Activated CD4-positive, alpha-beta T cell treated with anti-CD3 and anti-CD28 coated beads, Interleukin-2, amount 10 ng/mL, durations not matched to agents 24 days and 14 days (primary cell): ENCODE measurements at regions of chr3 and their contacts with region 1.

Region 1: GRCh38 chr3:107690522-107691138 is 167.9 kb downstream of the BBX start:
- DNase-seq: peak; percentile 62
- H3K4me3 Mint-ChIP-seq: no peak overlapping the region
- H3K27ac Mint-ChIP-seq: no peak overlapping the region
- H3K4me1 Mint-ChIP-seq: no peaks in the 10 kb centered on the region
- H3K27me3 Mint-ChIP-seq: no peaks in the 10 kb centered on the region

Region 2: DNA sequence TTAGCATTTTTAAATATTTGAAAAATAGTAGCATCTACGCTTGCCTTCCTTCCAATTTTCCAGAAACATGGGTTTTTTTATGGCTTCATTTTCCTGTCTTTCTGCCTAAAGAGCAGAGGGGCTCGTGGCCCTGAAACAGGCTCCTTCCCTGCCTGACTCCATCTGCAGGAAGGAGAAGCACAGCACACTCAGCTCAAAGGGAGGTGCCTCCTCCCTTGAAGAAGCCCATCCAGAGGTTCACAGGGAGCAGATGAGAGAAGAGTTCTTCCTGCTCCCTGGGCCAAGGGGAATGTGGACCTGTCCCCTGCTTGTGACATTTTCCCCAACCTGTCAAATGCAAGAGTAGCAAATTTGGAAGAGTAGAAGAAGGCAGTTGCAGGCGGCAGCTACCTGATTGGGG is 112.1 kb before region 1 on chr3:
- intact Hi-C with region 1: no loop called
- DNase-seq: no peak
- H3K4me3 Mint-ChIP-seq: no peak overlapping the region
- H3K27ac Mint-ChIP-seq: no peak overlapping the region
- H3K4me1 Mint-ChIP-seq: peaks cover 11% of the 10 kb centered on the region
- H3K27me3 Mint-ChIP-seq: no peaks in the 10 kb centered on the region

Region 3: GRCh38 chr3:107740992-107741896 is 50.6 kb after region 1 on chr3:
- intact Hi-C with region 1: loop called (anchors 2 kb)
- DNase-seq: no peak
- H3K4me3 Mint-ChIP-seq: no peak overlapping the region
- H3K27ac Mint-ChIP-seq: no peak overlapping the region
- H3K4me1 Mint-ChIP-seq: no peaks in the 10 kb centered on the region
- H3K27me3 Mint-ChIP-seq: no peaks in the 10 kb centered on the region

Region 4: GRCh38 chr3:108835101-108835500 is 1144.5 kb after region 1 on chr3:
- intact Hi-C with region 1: no loop called
- DNase-seq: peak; percentile 86
- H3K4me3 Mint-ChIP-seq: peak overlapping the region; percentile 90
- H3K27ac Mint-ChIP-seq: peak overlapping the region; percentile 98
- H3K4me1 Mint-ChIP-seq: peaks cover 70% of the 10 kb centered on the region
- H3K27me3 Mint-ChIP-seq: no peaks in the 10 kb centered on the region